ENCODE measurements at regions of chr6 and their contacts with region 1.

Region 1: GRCh38 chr6:111973118-111973761 is 80.7 kb upstream of the CCN6 start:
- DNase-seq: peak; percentile 63 to 91 (median 78)
- H3K4me3 ChIP-seq: peak overlapping the region in 1 of 2 donors; percentile 6
- H3K4me3 Mint-ChIP-seq: peak overlapping the region; percentile 61 to 79 (median 66)
- H3K27ac ChIP-seq: peak overlapping the region; percentile 75
- H3K27ac Mint-ChIP-seq: peak overlapping the region; percentile 89 to 99 (median 95)
- H3K4me1 ChIP-seq: peaks cover 29% of the 10 kb centered on the region
- H3K4me1 Mint-ChIP-seq: peaks cover 30 to 60% (median 48%) of the 10 kb centered on the region in 4 donors
- H3K27me3 ChIP-seq: no peaks in the 10 kb centered on the region
- H3K27me3 Mint-ChIP-seq: no peaks in the 10 kb centered on the region

Region 2: GRCh38 chr6:111925296-111925695 is 47.9 kb before region 1 on chr6:
- CTCF ChIA-PET with region 1: no interaction called
- POLR2A ChIA-PET with region 1: no interaction called
- intact Hi-C with region 1: loop called (anchors 5 kb)
- DNase-seq: no peak
- H3K4me3 ChIP-seq: no peak overlapping the region
- H3K4me3 Mint-ChIP-seq: no peak overlapping the region
- H3K27ac ChIP-seq: no peak overlapping the region
- H3K27ac Mint-ChIP-seq: no peak overlapping the region
- H3K4me1 ChIP-seq: no peaks in the 10 kb centered on the region
- H3K4me1 Mint-ChIP-seq: peaks cover 0 to 5% (median under 1%) of the 10 kb centered on the region in 4 donors
- H3K27me3 ChIP-seq: no peaks in the 10 kb centered on the region
- H3K27me3 Mint-ChIP-seq: no peaks in the 10 kb centered on the region

Region 3: GRCh38 chr6:111985202-111985731 is 12.0 kb after region 1 on chr6:
- CTCF ChIA-PET with region 1: interaction called, 12 read pairs
- POLR2A ChIA-PET with region 1: interaction called, 62 read pairs
- intact Hi-C with region 1: loop called (anchors 1 kb)
- DNase-seq: peak in 4 of 5 donors; percentile 33 to 70 (median 43)
- H3K4me3 ChIP-seq: no peak overlapping the region
- H3K4me3 Mint-ChIP-seq: peak overlapping the region in 6 of 8 donors; percentile 7 to 74 (median 25)
- H3K27ac ChIP-seq: no peak overlapping the region
- H3K27ac Mint-ChIP-seq: peak overlapping the region; percentile 42 to 89 (median 70)
- H3K4me1 ChIP-seq: peaks cover 70% of the 10 kb centered on the region
- H3K4me1 Mint-ChIP-seq: peaks cover 47 to 85% (median 72%) of the 10 kb centered on the region in 4 donors
- H3K27me3 ChIP-seq: no peaks in the 10 kb centered on the region
- H3K27me3 Mint-ChIP-seq: no peaks in the 10 kb centered on the region